ENCODE measurements at regions of chr6 and their contacts with region 1.

Region 1: GRCh38 chr6:135535989-135536414 is 38.5 kb upstream of the AHI1 start:
- DNase-seq: peak; percentile 8
- ATAC-seq: no peak
- H3K4me3 Mint-ChIP-seq: no peak overlapping the region
- H3K27ac Mint-ChIP-seq: no peak overlapping the region
- H3K4me1 Mint-ChIP-seq: peaks cover 27% of the 10 kb centered on the region
- H3K27me3 Mint-ChIP-seq: peaks cover 3% of the 10 kb centered on the region

Region 2: DNA sequence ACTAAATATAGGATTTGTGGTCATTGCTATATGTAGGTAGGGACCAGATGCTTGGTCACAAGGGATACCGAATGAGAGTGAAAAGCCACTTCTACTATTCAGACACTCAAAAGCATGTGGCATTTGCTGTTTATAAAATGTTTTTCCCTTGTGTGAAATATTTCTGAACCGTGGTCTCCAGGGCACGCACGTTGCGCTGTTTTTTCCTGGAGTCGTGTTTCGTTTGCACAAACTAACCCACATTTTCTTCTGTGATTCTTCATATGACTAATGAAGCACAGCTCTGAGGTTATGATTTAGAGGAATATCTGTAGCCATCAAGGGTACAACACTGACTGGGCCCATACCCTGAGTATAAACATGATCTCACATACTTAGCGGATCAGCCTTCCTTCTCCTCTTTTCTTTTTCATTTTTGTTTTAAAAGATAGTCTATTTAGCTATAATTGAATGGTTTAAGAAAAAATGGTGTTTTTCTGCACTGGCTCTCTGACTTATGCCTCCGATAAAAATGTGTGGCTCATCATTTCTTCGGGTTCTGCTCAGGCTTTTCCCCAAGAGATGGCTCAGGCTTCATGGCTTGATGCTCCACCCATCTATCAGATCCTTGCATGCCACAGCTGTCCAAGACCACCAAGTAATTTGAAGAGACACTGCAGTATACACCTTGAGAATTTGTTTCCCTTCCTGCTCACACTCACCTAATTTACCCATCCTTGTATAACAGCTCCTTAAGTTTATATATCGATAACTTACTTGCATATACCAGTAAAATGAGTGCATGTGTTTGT is 421.5 kb before region 1 on chr6:
- CTCF ChIA-PET with region 1: no interaction called
- POLR2A ChIA-PET with region 1: no interaction called
- intact Hi-C with region 1: no loop called
- DNase-seq: peak; percentile 82
- ATAC-seq: peak; percentile 70
- H3K4me3 Mint-ChIP-seq: peak overlapping the region; percentile 54
- H3K27ac Mint-ChIP-seq: peak overlapping the region; percentile 95
- H3K4me1 Mint-ChIP-seq: peaks cover 79% of the 10 kb centered on the region
- H3K27me3 Mint-ChIP-seq: no peaks in the 10 kb centered on the region

Region 3: GRCh38 chr6:135465307-135465706 is 70.7 kb before region 1 on chr6:
- CTCF ChIA-PET with region 1: no interaction called
- POLR2A ChIA-PET with region 1: no interaction called
- intact Hi-C with region 1: no loop called
- DNase-seq: no peak
- ATAC-seq: no peak
- H3K4me3 Mint-ChIP-seq: no peak overlapping the region
- H3K27ac Mint-ChIP-seq: no peak overlapping the region
- H3K4me1 Mint-ChIP-seq: peaks cover 5% of the 10 kb centered on the region
- H3K27me3 Mint-ChIP-seq: no peaks in the 10 kb centered on the region

Region 4: DNA sequence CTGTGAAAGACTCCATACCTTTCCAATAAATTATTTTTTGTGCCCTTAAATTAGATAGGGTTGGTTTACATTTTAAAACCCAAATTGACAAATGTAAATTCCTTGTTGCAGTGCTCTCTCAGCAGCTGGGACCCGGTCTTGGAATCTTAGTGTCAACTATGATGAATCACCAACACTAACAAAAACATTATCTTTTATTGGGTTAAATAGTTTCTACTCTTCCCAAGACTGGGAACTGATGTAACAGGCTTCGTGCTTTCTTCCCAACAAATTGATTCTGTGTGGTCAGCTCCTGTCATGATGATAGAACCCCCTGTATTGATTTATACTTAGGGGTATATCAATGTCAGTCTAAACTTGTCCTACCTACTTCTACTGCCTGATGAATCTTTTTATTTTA is 15.2 kb before region 1 on chr6:
- CTCF ChIA-PET with region 1: interaction called, 11 read pairs
- POLR2A ChIA-PET with region 1: interaction called, 3 read pairs
- intact Hi-C with region 1: no loop called
- DNase-seq: no peak
- ATAC-seq: no peak
- H3K4me3 Mint-ChIP-seq: no peak overlapping the region
- H3K27ac Mint-ChIP-seq: no peak overlapping the region
- H3K4me1 Mint-ChIP-seq: peaks cover 6% of the 10 kb centered on the region
- H3K27me3 Mint-ChIP-seq: peaks cover 3% of the 10 kb centered on the region

Region 5: DNA sequence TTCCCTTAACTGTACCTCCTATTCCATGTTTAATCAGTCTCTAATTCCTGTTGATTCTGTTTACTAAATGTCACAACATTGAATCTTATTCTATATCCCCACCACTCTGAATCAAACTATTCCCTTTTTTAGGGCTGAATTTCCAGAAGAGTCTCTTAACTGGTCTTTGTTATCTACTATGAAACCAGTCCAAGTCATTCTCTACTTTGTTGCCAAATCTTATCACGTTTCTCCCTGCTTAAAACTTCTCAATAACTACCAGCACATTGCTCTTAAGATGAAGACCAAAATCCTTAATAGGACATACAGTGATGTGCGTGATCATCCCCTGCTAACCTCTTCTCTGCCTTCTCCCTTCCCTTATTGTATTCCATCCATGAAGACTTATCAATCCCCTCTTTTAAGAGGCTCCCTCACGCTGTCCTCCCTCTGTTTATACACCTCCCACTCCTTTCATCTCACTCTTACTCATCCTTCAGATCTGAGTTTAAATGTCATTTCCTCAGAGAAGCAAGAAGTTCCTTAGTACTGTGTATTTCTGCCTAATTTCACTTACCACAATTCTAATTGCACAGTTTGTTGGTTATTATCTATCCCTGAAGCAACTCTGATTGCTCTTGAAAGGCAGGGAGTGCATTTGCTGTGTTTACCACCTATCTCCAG is 104.6 kb after region 1 on chr6:
- CTCF ChIA-PET with region 1: interaction called, 4 read pairs
- POLR2A ChIA-PET with region 1: no interaction called
- intact Hi-C with region 1: loop called in 1 of 2 experiments (anchors 2 kb)
- DNase-seq: peak; percentile 19
- ATAC-seq: peak; percentile 91
- H3K4me3 Mint-ChIP-seq: no peak overlapping the region
- H3K27ac Mint-ChIP-seq: peak overlapping the region; percentile 69
- H3K4me1 Mint-ChIP-seq: peaks cover 41% of the 10 kb centered on the region
- H3K27me3 Mint-ChIP-seq: peaks cover 4% of the 10 kb centered on the region

Region 6: GRCh38 chr6:135759831-135760230 is 223.8 kb after region 1 on chr6:
- CTCF ChIA-PET with region 1: no interaction called
- POLR2A ChIA-PET with region 1: no interaction called
- intact Hi-C with region 1: loop called in 1 of 2 experiments (anchors 10 kb)
- DNase-seq: peak; percentile 9
- ATAC-seq: no peak
- H3K4me3 Mint-ChIP-seq: no peak overlapping the region
- H3K27ac Mint-ChIP-seq: no peak overlapping the region
- H3K4me1 Mint-ChIP-seq: no peaks in the 10 kb centered on the region
- H3K27me3 Mint-ChIP-seq: no peaks in the 10 kb centered on the region

Region 7: GRCh38 chr6:135890876-135891275 is 354.9 kb after region 1 on chr6:
- CTCF ChIA-PET with region 1: no interaction called
- POLR2A ChIA-PET with region 1: no interaction called
- intact Hi-C with region 1: no loop called
- DNase-seq: no peak
- ATAC-seq: no peak
- H3K4me3 Mint-ChIP-seq: no peak overlapping the region
- H3K27ac Mint-ChIP-seq: no peak overlapping the region
- H3K4me1 Mint-ChIP-seq: no peaks in the 10 kb centered on the region
- H3K27me3 Mint-ChIP-seq: no peaks in the 10 kb centered on the region

Region 8: DNA sequence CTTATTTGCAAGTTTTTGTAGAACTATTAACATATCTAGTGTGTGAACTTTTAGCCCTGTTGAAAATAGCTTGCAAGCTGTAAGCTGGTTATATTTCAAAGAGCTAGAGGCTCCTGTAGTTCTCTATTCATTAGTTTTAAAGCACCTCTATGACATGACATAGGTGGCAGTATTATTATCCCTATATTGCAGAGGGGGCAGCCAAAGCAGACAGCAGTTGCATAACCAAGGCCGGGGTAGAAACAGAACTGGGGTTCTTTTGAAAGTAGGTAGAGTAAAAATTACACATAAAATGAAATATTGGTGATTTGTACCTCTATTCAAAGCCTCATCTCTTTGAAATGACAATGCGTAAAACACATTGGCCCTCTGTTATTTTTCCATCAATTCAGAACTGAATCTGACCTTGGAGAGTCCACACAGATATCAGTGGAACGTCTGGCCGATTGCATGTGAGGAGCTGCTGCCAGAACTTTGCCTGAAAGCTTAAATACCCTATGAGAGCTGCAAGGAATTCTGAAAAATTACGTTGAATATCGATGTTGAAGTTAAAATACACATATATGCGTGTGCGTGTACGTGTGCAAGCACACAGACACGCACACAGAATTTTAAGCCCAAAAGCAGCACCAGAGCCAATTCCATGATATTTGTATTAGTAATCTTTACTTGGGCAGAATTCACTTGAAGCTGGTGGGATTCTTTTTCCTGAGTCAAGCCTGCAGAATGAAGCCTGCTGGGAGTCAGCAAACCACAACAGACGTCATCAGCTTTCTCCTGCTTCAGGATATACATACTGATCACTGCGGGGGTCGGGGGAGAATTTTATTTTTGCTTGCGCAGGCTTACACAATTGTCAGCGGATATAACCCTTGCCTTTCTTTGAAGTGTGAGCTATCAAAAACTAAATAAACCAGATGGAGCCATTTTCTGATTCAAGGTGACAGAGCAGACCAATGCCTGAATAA is 478.7 kb after region 1 on chr6:
- CTCF ChIA-PET with region 1: no interaction called
- POLR2A ChIA-PET with region 1: no interaction called
- intact Hi-C with region 1: no loop called
- DNase-seq: no peak
- ATAC-seq: no peak
- H3K4me3 Mint-ChIP-seq: no peak overlapping the region
- H3K27ac Mint-ChIP-seq: no peak overlapping the region
- H3K4me1 Mint-ChIP-seq: no peaks in the 10 kb centered on the region
- H3K27me3 Mint-ChIP-seq: peaks cover 3% of the 10 kb centered on the region

Region 9: GRCh38 chr6:136226027-136226673 is 690.1 kb after region 1 on chr6:
- CTCF ChIA-PET with region 1: interaction called, 35 read pairs
- POLR2A ChIA-PET with region 1: no interaction called
- intact Hi-C with region 1: loop called (anchors 1 to 5 kb)
- DNase-seq: peak; percentile 72
- ATAC-seq: peak; percentile 80
- H3K4me3 Mint-ChIP-seq: no peak overlapping the region
- H3K27ac Mint-ChIP-seq: no peak overlapping the region
- H3K4me1 Mint-ChIP-seq: peaks cover 11% of the 10 kb centered on the region
- H3K27me3 Mint-ChIP-seq: no peaks in the 10 kb centered on the region

Measured in activated CD4-positive, alpha-beta T cell treated with anti-CD3 and anti-CD28 coated beads for 36 hours (primary cell).